IMR-90 (cell line): ENCODE measurements at regions of chr18 and their contacts with region 1.

Region 1: DNA sequence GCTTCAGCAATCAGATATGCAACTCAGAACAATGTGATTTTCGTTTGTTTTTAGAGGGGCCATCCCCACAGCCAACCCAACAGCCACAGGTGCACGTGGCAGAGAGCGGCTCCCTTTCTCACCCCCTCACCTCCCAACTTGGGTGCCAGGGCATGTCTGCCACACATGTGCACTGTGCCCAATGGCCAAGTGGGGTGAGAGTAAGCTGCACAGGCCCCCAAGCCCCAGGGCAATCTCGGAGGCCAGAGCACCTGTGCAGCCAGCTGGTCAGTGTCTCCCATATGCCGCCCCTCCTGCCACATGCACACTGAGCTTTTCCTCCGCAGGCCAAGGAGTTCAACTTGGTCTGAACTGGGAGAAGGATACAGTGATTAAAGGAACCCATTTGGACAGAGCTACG is 1130.2 kb downstream of the DSC3 start:
- DNase-seq: no peak
- ATAC-seq: no peak
- H3K4me3 ChIP-seq: no peak overlapping the region
- H3K27ac ChIP-seq: no peak overlapping the region
- H3K4me1 ChIP-seq: no peaks in the 10 kb centered on the region
- H3K27me3 ChIP-seq: no peaks in the 10 kb centered on the region
- CTCF ChIP-seq: no peak
- POLR2A ChIP-seq: no peak
- RAD21 ChIP-seq: no peak

Region 2: DNA sequence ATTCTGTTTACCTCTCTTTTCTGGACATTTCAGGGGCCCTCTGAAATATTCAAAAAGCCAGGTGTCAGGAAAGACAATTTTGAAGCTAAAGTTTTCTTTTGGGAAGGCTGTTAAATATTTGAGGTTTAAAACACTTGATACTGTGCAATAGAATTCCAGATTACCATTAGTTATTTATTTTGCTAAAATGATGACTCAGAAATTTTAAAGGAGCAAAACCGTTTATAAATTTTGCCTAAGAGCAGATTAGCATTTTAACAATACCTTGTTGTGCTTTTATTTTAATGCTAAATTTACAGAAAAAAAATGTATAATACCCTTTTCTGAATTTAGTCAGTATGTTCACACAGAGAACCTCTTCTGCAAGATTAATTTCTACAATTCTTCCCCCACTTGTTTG is 29.7 kb before region 1 on chr18:
- CTCF ChIA-PET with region 1: no interaction called
- POLR2A ChIA-PET with region 1: no interaction called
- dilution Hi-C with region 1: no loop called
- in situ Hi-C with region 1: no loop called
- intact Hi-C with region 1: loop called (anchors 1 kb)
- DNase-seq: no peak
- ATAC-seq: no peak
- H3K4me3 ChIP-seq: no peak overlapping the region
- H3K27ac ChIP-seq: no peak overlapping the region
- H3K4me1 ChIP-seq: no peaks in the 10 kb centered on the region
- H3K27me3 ChIP-seq: no peaks in the 10 kb centered on the region
- CTCF ChIP-seq: no peak
- POLR2A ChIP-seq: no peak
- RAD21 ChIP-seq: no peak